Panc1 (cell line): ENCODE measurements at regions of chr13 and their contacts with region 1.

Region 1: DNA sequence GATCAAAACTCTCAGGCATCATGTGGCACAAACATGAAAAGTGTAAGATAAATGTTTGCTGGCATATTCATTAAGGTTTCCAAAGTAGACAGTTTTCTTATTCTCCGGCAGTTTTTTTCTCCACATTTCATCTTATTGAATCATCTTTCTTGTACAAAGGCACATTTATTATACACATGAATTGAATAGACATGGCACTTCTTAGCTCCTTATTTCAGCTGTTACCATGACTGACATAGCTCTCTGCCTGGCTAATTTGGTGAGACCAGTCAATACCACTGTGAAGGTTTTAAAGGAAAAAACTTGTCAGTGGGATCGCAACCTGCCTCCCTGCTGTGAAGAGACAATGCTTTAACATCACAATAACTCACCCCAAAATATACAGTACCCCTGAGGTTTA is 285.0 kb upstream of the PCDH20 start:
- DNase-seq: no peak
- ATAC-seq: no peak
- H3K4me3 ChIP-seq: no peak overlapping the region
- H3K27ac ChIP-seq: no peak overlapping the region
- H3K4me1 ChIP-seq: no peaks in the 10 kb centered on the region
- H3K27me3 ChIP-seq: no peaks in the 10 kb centered on the region
- CTCF ChIP-seq: no peak

Region 2: DNA sequence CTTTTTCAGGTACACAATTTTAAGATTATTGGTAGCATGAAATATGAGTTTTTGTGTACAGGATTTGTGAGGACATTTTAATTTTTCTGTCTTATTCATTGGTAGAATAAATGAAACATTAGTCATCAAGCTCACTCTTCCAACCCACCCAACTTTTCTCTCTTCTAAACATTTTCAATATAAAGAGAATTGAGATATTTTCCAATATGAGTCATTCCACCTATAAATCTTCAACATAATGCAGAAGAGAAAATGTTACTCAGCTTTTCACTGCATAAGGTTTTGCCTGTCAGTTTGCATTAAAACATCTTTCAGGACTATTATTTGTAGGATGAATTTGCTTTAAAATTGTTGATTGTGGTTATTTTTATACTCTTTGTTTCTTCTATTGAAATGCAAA is 615.6 kb before region 1 on chr13:
- CTCF ChIA-PET with region 1: no interaction called
- POLR2A ChIA-PET with region 1: no interaction called
- in situ Hi-C with region 1: no loop called
- intact Hi-C with region 1: no loop called
- DNase-seq: no peak
- ATAC-seq: no peak
- H3K4me3 ChIP-seq: no peak overlapping the region
- H3K27ac ChIP-seq: no peak overlapping the region
- H3K4me1 ChIP-seq: no peaks in the 10 kb centered on the region
- H3K27me3 ChIP-seq: no peaks in the 10 kb centered on the region
- CTCF ChIP-seq: no peak

Region 3: DNA sequence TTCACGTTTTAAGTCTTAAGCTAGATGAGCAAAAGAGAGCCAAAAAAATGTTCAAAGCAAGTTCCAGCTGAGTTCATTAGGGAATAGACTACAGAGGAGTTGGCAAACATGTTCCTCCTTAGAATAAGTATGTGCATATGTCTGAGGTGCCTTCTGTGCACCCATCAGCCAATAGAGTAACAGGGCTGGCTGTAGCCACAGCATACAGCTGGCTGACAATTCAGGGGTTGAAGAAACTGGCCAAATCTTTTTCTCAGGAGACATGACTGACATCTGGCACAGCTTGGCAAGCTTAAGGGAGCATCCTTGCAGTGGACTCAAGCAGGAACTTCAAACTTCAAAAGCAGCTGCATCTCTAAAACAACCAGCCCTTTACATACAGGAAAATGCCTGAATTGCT is 129.9 kb after region 1 on chr13:
- CTCF ChIA-PET with region 1: interaction called, 14 read pairs
- POLR2A ChIA-PET with region 1: no interaction called
- in situ Hi-C with region 1: no loop called
- intact Hi-C with region 1: no loop called
- DNase-seq: no peak
- ATAC-seq: no peak
- H3K4me3 ChIP-seq: no peak overlapping the region
- H3K27ac ChIP-seq: no peak overlapping the region
- H3K4me1 ChIP-seq: no peaks in the 10 kb centered on the region
- H3K27me3 ChIP-seq: no peaks in the 10 kb centered on the region
- CTCF ChIP-seq: no peak